PC-9 (cell line): ENCODE measurements at regions of chr3 and their contacts with region 1.

Region 1: GRCh38 chr3:143182866-143183664 is 63.5 kb downstream of the CHST2 start:
- DNase-seq: no peak
- H3K4me3 ChIP-seq: no peak overlapping the region
- H3K27ac ChIP-seq: no peak overlapping the region
- H3K4me1 ChIP-seq: no peaks in the 10 kb centered on the region
- H3K27me3 ChIP-seq: no peaks in the 10 kb centered on the region
- CTCF ChIP-seq: no peak

Region 2: GRCh38 chr3:143208976-143209714 is 26.1 kb after region 1 on chr3:
- CTCF ChIA-PET with region 1: no interaction called
- POLR2A ChIA-PET with region 1: no interaction called
- intact Hi-C with region 1: loop called (anchors 1 kb)
- DNase-seq: no peak
- H3K4me3 ChIP-seq: no peak overlapping the region
- H3K27ac ChIP-seq: no peak overlapping the region
- H3K4me1 ChIP-seq: no peaks in the 10 kb centered on the region
- H3K27me3 ChIP-seq: peaks cover 5% of the 10 kb centered on the region; the same call in 1 of the 2 replicates
- CTCF ChIP-seq: no peak

Region 3: DNA sequence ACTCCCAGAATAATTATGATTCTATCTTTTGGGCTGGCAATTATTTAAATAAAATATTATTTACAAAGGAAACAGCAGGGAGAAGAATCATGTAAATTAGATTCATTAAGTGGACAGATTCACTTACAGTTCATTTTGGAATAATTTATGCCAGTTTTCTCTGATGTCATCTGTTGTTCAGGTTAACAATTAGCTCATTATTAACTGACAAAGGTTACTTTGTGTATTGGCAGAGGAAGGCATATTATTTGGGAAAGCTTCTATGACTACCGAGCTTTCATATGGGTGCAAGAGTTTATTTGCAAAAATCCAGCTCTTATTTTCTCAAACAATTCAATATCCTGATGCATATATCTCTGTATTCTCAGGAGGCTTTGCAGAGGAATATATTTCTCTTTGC is 160.9 kb after region 1 on chr3:
- CTCF ChIA-PET with region 1: interaction called, 14 read pairs
- POLR2A ChIA-PET with region 1: no interaction called
- intact Hi-C with region 1: no loop called
- DNase-seq: no peak
- H3K4me3 ChIP-seq: no peak overlapping the region
- H3K27ac ChIP-seq: no peak overlapping the region
- H3K4me1 ChIP-seq: no peaks in the 10 kb centered on the region
- H3K27me3 ChIP-seq: no peaks in the 10 kb centered on the region
- CTCF ChIP-seq: no peak